WTC11 (cell line): ENCODE measurements at regions of chr13 and their contacts with region 1.

Region 1: DNA sequence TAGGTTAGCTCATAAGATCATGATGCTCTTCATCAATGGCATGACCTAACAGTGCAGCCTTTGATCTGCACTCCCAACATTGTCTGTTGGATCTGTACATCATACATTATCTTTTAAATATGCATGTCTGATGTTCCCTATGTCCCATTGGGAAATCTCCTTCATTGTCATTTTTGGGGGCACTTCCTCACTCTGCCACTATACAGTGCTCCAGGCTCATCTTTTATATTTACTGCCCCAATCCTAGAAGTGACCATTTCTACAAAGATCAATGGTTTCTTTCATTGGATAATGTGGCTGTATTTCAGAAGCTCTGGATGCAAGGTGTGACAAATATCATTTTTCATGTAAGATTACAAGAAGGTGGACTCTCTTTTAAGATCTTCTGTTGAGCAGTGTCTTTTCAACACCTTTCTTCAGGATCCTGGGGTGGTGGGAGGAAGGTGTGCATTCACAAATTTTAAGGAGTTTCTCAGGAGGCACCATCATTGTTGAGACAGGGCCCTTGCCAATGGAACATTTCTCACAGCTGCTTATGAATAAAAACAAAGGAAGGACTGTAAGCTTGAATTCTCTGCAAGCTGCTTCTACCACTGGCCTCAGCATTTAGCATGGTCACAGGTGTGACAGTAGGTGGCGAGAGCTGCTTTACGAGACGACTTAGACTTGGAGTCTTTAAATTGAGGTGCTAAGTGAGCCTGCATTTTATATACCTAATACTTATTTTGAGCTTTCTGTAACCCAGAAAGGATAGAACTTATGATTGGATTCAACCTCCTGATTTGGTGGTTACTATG is 403.0 kb downstream of the LMO7 start:
- DNase-seq: peak; percentile 31
- ATAC-seq: peak; percentile 95
- H3K4me3 Mint-ChIP-seq: no peak overlapping the region
- H3K27ac Mint-ChIP-seq: no peak overlapping the region
- H3K4me1 Mint-ChIP-seq: peaks cover 4% of the 10 kb centered on the region
- H3K27me3 Mint-ChIP-seq: no peaks in the 10 kb centered on the region
- CTCF ChIP-seq: no peak

Region 2: GRCh38 chr13:76016799-76017400 is 22.2 kb before region 1 on chr13:
- CTCF ChIA-PET with region 1: interaction called, 12 read pairs
- POLR2A ChIA-PET with region 1: no interaction called
- DNase-seq: peak; percentile 58
- ATAC-seq: peak; percentile 78
- H3K4me3 Mint-ChIP-seq: no peak overlapping the region
- H3K27ac Mint-ChIP-seq: no peak overlapping the region
- H3K4me1 Mint-ChIP-seq: peaks cover 6% of the 10 kb centered on the region
- H3K27me3 Mint-ChIP-seq: no peaks in the 10 kb centered on the region
- CTCF ChIP-seq: 0 out of 2 replicates have a peak, but pooled peaks have one; percentile 30